ENCODE measurements at regions of chr4 and their contacts with region 1.

Region 1: GRCh38 chr4:81471588-81472288 is at the start of gene RASGEF1B:
- DNase-seq: peak; percentile 88 to 94
- H3K4me3 ChIP-seq: peak within 1 kb of the TSS; percentile 92
- H3K4me3 Mint-ChIP-seq: peak within 1 kb of the TSS; percentile 95
- H3K27ac Mint-ChIP-seq: peak within 1 kb of the TSS; percentile 94
- H3K4me1 ChIP-seq: peaks cover 38% of the 10 kb centered on the region
- H3K4me1 Mint-ChIP-seq: peaks cover 31% of the 10 kb centered on the region
- H3K27me3 ChIP-seq: no peaks in the 10 kb centered on the region
- H3K27me3 Mint-ChIP-seq: no peaks in the 10 kb centered on the region
- CTCF ChIP-seq: no peak
- total RNA-seq, gene RASGEF1B: 24.8 and 32.3 TPM in 2 replicates

Region 2: GRCh38 chr4:81498046-81498445 is 26.3 kb after region 1 on chr4:
- CTCF ChIA-PET with region 1: no interaction called
- POLR2A ChIA-PET with region 1: interaction called, 3 read pairs
- intact Hi-C with region 1: loop called (anchors 1 kb)
- DNase-seq: peak; percentile 67 to 86
- H3K4me3 ChIP-seq: no peak overlapping the region
- H3K4me3 Mint-ChIP-seq: peak overlapping the region; percentile 5
- H3K27ac Mint-ChIP-seq: peak overlapping the region; percentile 82
- H3K4me1 ChIP-seq: peaks cover 33% of the 10 kb centered on the region
- H3K4me1 Mint-ChIP-seq: peaks cover 29% of the 10 kb centered on the region
- H3K27me3 ChIP-seq: no peaks in the 10 kb centered on the region
- H3K27me3 Mint-ChIP-seq: no peaks in the 10 kb centered on the region
- CTCF ChIP-seq: no peak

Region 3: DNA sequence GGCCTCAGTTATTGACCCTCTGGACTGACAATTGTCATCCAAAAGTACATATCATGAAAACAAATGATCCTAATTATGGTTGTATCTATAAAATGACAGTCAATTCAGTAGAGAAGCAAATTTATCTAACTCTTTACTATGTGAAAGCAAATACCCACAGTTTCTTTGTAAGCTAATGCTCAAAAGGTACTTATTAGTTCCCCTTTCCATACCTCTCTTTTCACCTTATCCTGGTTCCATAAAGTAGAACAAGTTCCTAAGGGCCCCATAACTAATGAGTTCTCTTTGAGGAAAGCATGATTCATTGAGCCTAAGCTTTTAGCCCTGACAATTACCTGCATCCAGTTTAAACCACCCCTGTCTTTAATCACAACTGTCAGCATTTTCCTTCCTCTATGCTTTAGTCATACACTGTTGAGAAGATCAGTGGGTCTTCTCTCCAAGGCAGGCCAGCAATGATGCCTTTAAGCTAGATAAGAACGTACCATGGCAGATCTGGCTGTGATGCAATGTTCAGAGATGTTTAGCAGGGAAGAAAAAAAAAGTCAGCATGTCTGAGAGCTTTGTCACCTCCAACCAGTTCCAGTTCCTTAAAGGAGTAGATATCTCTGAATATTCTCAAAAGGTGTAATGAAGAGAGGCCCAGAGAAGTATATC is 179.6 kb after region 1 on chr4:
- CTCF ChIA-PET with region 1: no interaction called
- POLR2A ChIA-PET with region 1: no interaction called
- intact Hi-C with region 1: loop called (anchors 1 kb)
- DNase-seq: peak; percentile 19 to 46
- H3K4me3 ChIP-seq: no peak overlapping the region
- H3K4me3 Mint-ChIP-seq: no peak overlapping the region
- H3K27ac Mint-ChIP-seq: peak overlapping the region; percentile 75
- H3K4me1 ChIP-seq: peaks cover 28% of the 10 kb centered on the region
- H3K4me1 Mint-ChIP-seq: peaks cover 27% of the 10 kb centered on the region
- H3K27me3 ChIP-seq: no peaks in the 10 kb centered on the region
- H3K27me3 Mint-ChIP-seq: no peaks in the 10 kb centered on the region
- CTCF ChIP-seq: no peak

Region 4: GRCh38 chr4:81771721-81772120 is 300.0 kb after region 1 on chr4:
- CTCF ChIA-PET with region 1: no interaction called
- POLR2A ChIA-PET with region 1: interaction called, 4 read pairs
- intact Hi-C with region 1: loop called (anchors 5 kb)
- DNase-seq: no peak
- H3K4me3 ChIP-seq: no peak overlapping the region
- H3K4me3 Mint-ChIP-seq: no peak overlapping the region
- H3K27ac Mint-ChIP-seq: peak overlapping the region; percentile 94
- H3K4me1 ChIP-seq: peaks cover 27% of the 10 kb centered on the region
- H3K4me1 Mint-ChIP-seq: peaks cover 15% of the 10 kb centered on the region
- H3K27me3 ChIP-seq: no peaks in the 10 kb centered on the region
- H3K27me3 Mint-ChIP-seq: no peaks in the 10 kb centered on the region
- CTCF ChIP-seq: no peak

Region 5: GRCh38 chr4:81919238-81919637 is 447.5 kb after region 1 on chr4:
- CTCF ChIA-PET with region 1: interaction called, 21 read pairs
- POLR2A ChIA-PET with region 1: no interaction called
- intact Hi-C with region 1: loop called (anchors 1 kb)
- DNase-seq: peak; percentile 46 to 49
- H3K4me3 ChIP-seq: no peak overlapping the region
- H3K4me3 Mint-ChIP-seq: no peak overlapping the region
- H3K27ac Mint-ChIP-seq: no peak overlapping the region
- H3K4me1 ChIP-seq: peaks cover 5% of the 10 kb centered on the region; the same call in 1 of the 2 replicates
- H3K4me1 Mint-ChIP-seq: peaks cover 13% of the 10 kb centered on the region
- H3K27me3 ChIP-seq: no peaks in the 10 kb centered on the region
- H3K27me3 Mint-ChIP-seq: no peaks in the 10 kb centered on the region
- CTCF ChIP-seq: peak in 1 of 2 experiments; percentile 63

Region 6: GRCh38 chr4:82268050-82268825 is 796.5 kb after region 1 on chr4:
- CTCF ChIA-PET with region 1: interaction called, 6 read pairs
- POLR2A ChIA-PET with region 1: no interaction called
- intact Hi-C with region 1: loop called (anchors 1 kb)
- DNase-seq: peak; percentile 50 to 55
- H3K4me3 ChIP-seq: no peak overlapping the region
- H3K4me3 Mint-ChIP-seq: no peak overlapping the region
- H3K27ac Mint-ChIP-seq: no peak overlapping the region
- H3K4me1 ChIP-seq: peaks cover 18% of the 10 kb centered on the region
- H3K4me1 Mint-ChIP-seq: peaks cover 9% of the 10 kb centered on the region
- H3K27me3 ChIP-seq: no peaks in the 10 kb centered on the region
- H3K27me3 Mint-ChIP-seq: no peaks in the 10 kb centered on the region
- CTCF ChIP-seq: peak; percentile 58 to 85

Measured in Caco-2 (cell line).